ENCODE measurements at regions of chr9 and their contacts with region 1.

Region 1: GRCh38 chr9:98781588-98782383 is 14.6 kb downstream of the ANKS6 start:
- DNase-seq: peak; percentile 78
- ATAC-seq: peak; percentile 84
- H3K4me3 ChIP-seq: no peak overlapping the region
- H3K27ac ChIP-seq: peak overlapping the region; percentile 67
- H3K4me1 ChIP-seq: peaks cover 33% of the 10 kb centered on the region
- H3K27me3 ChIP-seq: no peaks in the 10 kb centered on the region
- CTCF ChIP-seq: no peak

Region 2: DNA sequence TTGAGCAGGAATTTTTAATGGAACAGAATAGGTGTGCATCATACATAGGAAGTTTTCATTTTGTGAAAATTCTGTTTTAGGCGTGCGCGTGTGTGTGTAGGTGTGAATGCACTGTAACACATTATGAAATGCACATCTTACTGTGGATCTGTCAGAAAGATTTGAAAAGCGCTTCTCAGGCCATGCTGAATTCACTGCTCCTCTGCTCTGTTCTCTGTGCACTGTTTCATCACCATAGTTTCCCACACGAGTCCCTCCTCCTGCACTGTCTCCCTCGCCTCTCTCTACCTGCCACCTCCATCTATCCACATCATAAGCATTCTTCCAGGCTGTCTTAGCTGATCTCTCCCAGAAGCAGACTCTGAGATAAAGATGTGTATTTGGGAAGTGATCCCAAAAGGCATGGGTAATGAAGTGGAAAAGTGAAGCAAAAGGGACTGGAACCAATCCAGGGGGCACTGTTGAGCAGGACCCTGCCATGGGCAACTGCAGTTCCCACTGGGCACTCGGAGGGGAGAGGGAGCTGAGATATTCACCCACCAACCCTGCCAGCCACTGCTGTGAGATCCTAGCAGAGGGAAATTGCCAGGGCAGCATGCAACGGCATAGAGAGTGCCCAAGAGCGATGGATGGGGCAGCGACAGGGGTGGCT is 139.0 kb before region 1 on chr9:
- CTCF ChIA-PET with region 1: no interaction called
- POLR2A ChIA-PET with region 1: no interaction called
- intact Hi-C with region 1: no loop called
- DNase-seq: no peak
- ATAC-seq: no peak
- H3K4me3 ChIP-seq: no peak overlapping the region
- H3K27ac ChIP-seq: no peak overlapping the region
- H3K4me1 ChIP-seq: no peaks in the 10 kb centered on the region
- H3K27me3 ChIP-seq: no peaks in the 10 kb centered on the region
- CTCF ChIP-seq: no peak

Region 3: GRCh38 chr9:98686961-98687855 is 94.6 kb before region 1 on chr9:
- CTCF ChIA-PET with region 1: no interaction called
- POLR2A ChIA-PET with region 1: interaction called, 12 read pairs
- intact Hi-C with region 1: no loop called
- DNase-seq: no peak
- ATAC-seq: no peak
- H3K4me3 ChIP-seq: no peak overlapping the region
- H3K27ac ChIP-seq: no peak overlapping the region
- H3K4me1 ChIP-seq: no peaks in the 10 kb centered on the region
- H3K27me3 ChIP-seq: no peaks in the 10 kb centered on the region
- CTCF ChIP-seq: no peak

Measured in PC-3 (cell line).